CD8-positive, alpha-beta memory T cell (primary cell): ENCODE measurements at regions of chr10 and their contacts with region 1.

Region 1: DNA sequence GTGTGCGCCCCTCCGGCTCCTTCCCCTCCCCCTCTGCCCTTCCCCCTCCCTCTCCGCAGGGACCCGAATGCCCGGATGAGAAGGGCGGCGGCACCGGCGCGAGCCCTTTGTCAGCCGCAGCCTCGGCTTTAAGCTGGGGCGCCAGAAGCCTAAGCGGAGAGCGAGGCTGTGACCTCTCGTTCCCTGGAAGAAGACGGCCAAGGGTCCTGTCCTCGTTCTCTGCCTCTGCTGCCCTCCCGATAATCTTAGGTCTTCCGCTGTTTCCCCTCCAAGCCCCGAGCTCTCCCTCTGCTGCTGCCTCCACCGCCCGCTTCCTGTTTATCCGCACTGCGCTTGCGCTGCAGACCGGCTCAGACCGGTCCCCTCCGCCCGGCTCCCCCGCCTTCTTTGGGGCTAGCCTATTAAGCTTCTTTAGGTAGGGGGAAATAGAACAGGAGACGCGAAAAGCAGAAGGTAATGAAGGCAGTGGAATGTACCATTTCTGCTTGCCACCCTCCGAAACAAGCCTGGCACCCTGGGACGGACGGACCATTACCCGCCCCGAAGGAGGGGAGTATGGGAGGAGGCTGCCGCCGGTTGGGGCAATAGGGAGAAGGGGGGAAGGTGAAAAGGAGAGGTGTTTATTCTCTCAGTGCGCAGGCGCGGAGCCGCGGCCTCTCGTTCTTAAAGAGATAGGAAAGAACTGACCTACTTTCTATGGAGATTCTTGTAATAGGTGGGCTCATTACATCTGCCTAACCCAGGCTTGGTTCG is at the start of gene OGA:
- DNase-seq: peak; percentile 96 to 100 (median 99)
- H3K4me3 ChIP-seq: peak within 1 kb of the TSS; percentile 79
- H3K4me3 Mint-ChIP-seq: peak within 1 kb of the TSS; percentile 92 to 100 (median 97)
- H3K27ac ChIP-seq: peak within 1 kb of the TSS; percentile 79
- H3K27ac Mint-ChIP-seq: peak within 1 kb of the TSS; percentile 90 to 99 (median 97)
- H3K4me1 ChIP-seq: peaks cover 30% of the 10 kb centered on the region
- H3K4me1 Mint-ChIP-seq: peaks cover 42 to 49% (median 45%) of the 10 kb centered on the region in 3 donors
- H3K27me3 ChIP-seq: no peaks in the 10 kb centered on the region
- H3K27me3 Mint-ChIP-seq: peaks cover 0 to 4% of the 10 kb centered on the region in 2 donors
- total RNA-seq, gene OGA: 95.8 to 109 TPM

Region 2: GRCh38 chr10:101725296-101726115 is 92.8 kb before region 1 on chr10:
- CTCF ChIA-PET with region 1: no interaction called
- POLR2A ChIA-PET with region 1: no interaction called
- DNase-seq: no peak
- H3K4me3 ChIP-seq: no peak overlapping the region
- H3K4me3 Mint-ChIP-seq: no peak overlapping the region
- H3K27ac ChIP-seq: no peak overlapping the region
- H3K27ac Mint-ChIP-seq: no peak overlapping the region
- H3K4me1 ChIP-seq: no peaks in the 10 kb centered on the region
- H3K4me1 Mint-ChIP-seq: no peaks in the 10 kb centered on the region
- H3K27me3 ChIP-seq: no peaks in the 10 kb centered on the region
- H3K27me3 Mint-ChIP-seq: peaks cover 3 to 30% of the 10 kb centered on the region in 2 donors

Region 3: GRCh38 chr10:101830322-101831168 is 12.2 kb after region 1 on chr10:
- CTCF ChIA-PET with region 1: interaction called, 23 read pairs
- POLR2A ChIA-PET with region 1: interaction called, 39 read pairs
- DNase-seq: peak; percentile 92 to 96 (median 93)
- H3K4me3 ChIP-seq: peak overlapping the region; percentile 56
- H3K4me3 Mint-ChIP-seq: peak overlapping the region; percentile 88 to 94 (median 91)
- H3K27ac ChIP-seq: peak overlapping the region; percentile 52
- H3K27ac Mint-ChIP-seq: peak overlapping the region; percentile 95 to 99 (median 97)
- H3K4me1 ChIP-seq: peaks cover 55% of the 10 kb centered on the region
- H3K4me1 Mint-ChIP-seq: peaks cover 42 to 61% (median 49%) of the 10 kb centered on the region in 3 donors
- H3K27me3 ChIP-seq: no peaks in the 10 kb centered on the region
- H3K27me3 Mint-ChIP-seq: peaks cover 0 to 10% of the 10 kb centered on the region in 2 donors

Region 4: DNA sequence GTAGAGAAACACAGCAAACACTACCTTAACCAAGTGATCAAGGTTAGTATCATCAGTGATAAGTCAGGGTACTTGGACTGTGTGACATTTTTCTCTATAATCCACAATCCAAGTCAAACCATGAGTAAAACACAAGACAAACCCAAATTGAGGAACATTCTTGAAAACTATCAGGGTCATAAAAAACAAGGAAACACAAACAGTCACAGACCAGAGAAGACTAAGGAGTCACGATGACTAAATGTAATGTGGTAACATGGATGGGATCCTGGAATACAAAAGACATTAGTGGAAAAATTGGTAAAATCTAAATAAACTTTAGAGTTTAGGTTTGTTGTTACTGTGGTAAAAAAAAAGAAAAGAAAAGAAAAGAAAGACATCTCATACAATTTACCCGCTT is 133.9 kb after region 1 on chr10:
- CTCF ChIA-PET with region 1: no interaction called
- POLR2A ChIA-PET with region 1: no interaction called
- DNase-seq: no peak
- H3K4me3 ChIP-seq: no peak overlapping the region
- H3K4me3 Mint-ChIP-seq: no peak overlapping the region
- H3K27ac ChIP-seq: no peak overlapping the region
- H3K27ac Mint-ChIP-seq: no peak overlapping the region
- H3K4me1 ChIP-seq: no peaks in the 10 kb centered on the region
- H3K4me1 Mint-ChIP-seq: peaks cover 0 to 4% (median 0%) of the 10 kb centered on the region in 3 donors
- H3K27me3 ChIP-seq: no peaks in the 10 kb centered on the region
- H3K27me3 Mint-ChIP-seq: no peaks in the 10 kb centered on the region